Caco-2 (cell line): ENCODE measurements at regions of chr15 and their contacts with region 1.

Region 1: GRCh38 chr15:38474155-38474757 is 20.3 kb downstream of the FAM98B start:
- DNase-seq: peak in 1 of 2 experiments; percentile 53
- H3K4me3 ChIP-seq: no peak overlapping the region
- H3K4me3 Mint-ChIP-seq: no peak overlapping the region
- H3K27ac Mint-ChIP-seq: no peak overlapping the region
- H3K4me1 ChIP-seq: no peaks in the 10 kb centered on the region
- H3K4me1 Mint-ChIP-seq: no peaks in the 10 kb centered on the region
- H3K27me3 ChIP-seq: no peaks in the 10 kb centered on the region
- H3K27me3 Mint-ChIP-seq: no peaks in the 10 kb centered on the region
- CTCF ChIP-seq: peak; percentile 64 to 66

Region 2: GRCh38 chr15:38508647-38509046 is 34.4 kb after region 1 on chr15:
- CTCF ChIA-PET with region 1: no interaction called
- POLR2A ChIA-PET with region 1: no interaction called
- intact Hi-C with region 1: no loop called
- DNase-seq: no peak
- H3K4me3 ChIP-seq: no peak overlapping the region
- H3K4me3 Mint-ChIP-seq: no peak overlapping the region
- H3K27ac Mint-ChIP-seq: no peak overlapping the region
- H3K4me1 ChIP-seq: no peaks in the 10 kb centered on the region
- H3K4me1 Mint-ChIP-seq: no peaks in the 10 kb centered on the region
- H3K27me3 ChIP-seq: no peaks in the 10 kb centered on the region
- H3K27me3 Mint-ChIP-seq: no peaks in the 10 kb centered on the region
- CTCF ChIP-seq: no peak

Region 3: GRCh38 chr15:38647683-38648082 is 173.4 kb after region 1 on chr15:
- CTCF ChIA-PET with region 1: no interaction called
- POLR2A ChIA-PET with region 1: no interaction called
- intact Hi-C with region 1: loop called (anchors 1 kb)
- DNase-seq: peak in 1 of 2 experiments; percentile 41
- H3K4me3 ChIP-seq: no peak overlapping the region
- H3K4me3 Mint-ChIP-seq: no peak overlapping the region
- H3K27ac Mint-ChIP-seq: no peak overlapping the region
- H3K4me1 ChIP-seq: no peaks in the 10 kb centered on the region
- H3K4me1 Mint-ChIP-seq: no peaks in the 10 kb centered on the region
- H3K27me3 ChIP-seq: no peaks in the 10 kb centered on the region
- H3K27me3 Mint-ChIP-seq: no peaks in the 10 kb centered on the region
- CTCF ChIP-seq: peak; percentile 28 to 52

Region 4: GRCh38 chr15:38683382-38684242 is 209.4 kb after region 1 on chr15:
- CTCF ChIA-PET with region 1: no interaction called
- POLR2A ChIA-PET with region 1: no interaction called
- intact Hi-C with region 1: loop called (anchors 1 kb)
- DNase-seq: peak in 1 of 2 experiments; percentile 50
- H3K4me3 ChIP-seq: no peak overlapping the region
- H3K4me3 Mint-ChIP-seq: no peak overlapping the region
- H3K27ac Mint-ChIP-seq: no peak overlapping the region
- H3K4me1 ChIP-seq: no peaks in the 10 kb centered on the region
- H3K4me1 Mint-ChIP-seq: peaks cover 8% of the 10 kb centered on the region
- H3K27me3 ChIP-seq: no peaks in the 10 kb centered on the region
- H3K27me3 Mint-ChIP-seq: peaks cover 3% of the 10 kb centered on the region
- CTCF ChIP-seq: peak; percentile 58 to 65